ENCODE measurements at regions of chr12 and their contacts with region 1.

Region 1: DNA sequence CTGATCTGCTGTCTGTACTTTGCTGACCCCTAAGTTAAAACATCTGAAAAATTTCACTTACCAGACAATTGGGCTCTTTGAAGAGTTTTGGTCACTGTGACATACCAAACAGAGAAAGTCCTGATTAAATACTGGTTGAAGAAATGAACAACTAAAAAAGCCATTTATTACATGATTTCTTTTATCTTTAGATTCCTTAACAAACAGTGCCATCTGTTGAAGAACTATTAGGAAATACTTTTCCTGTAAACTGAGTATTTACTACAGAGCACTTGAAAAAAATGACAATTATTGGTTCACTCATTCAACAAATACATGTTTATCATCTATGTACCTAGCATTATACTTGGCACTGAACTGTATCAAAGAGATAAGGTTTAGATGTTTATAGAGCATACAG is 6.5 kb upstream of the WASHC4 start:
- DNase-seq: peak; percentile 50
- ATAC-seq: peak; percentile 84
- H3K4me3 ChIP-seq: no peak overlapping the region
- H3K27ac ChIP-seq: no peak overlapping the region
- H3K4me1 ChIP-seq: peaks cover 10% of the 10 kb centered on the region
- H3K27me3 ChIP-seq: no peaks in the 10 kb centered on the region
- CTCF ChIP-seq: peak; percentile 63

Region 2: GRCh38 chr12:103877934-103878510 is 1223.0 kb before region 1 on chr12:
- CTCF ChIA-PET with region 1: no interaction called
- POLR2A ChIA-PET with region 1: no interaction called
- intact Hi-C with region 1: loop called (anchors 5 kb)
- DNase-seq: peak; percentile 94
- ATAC-seq: peak; percentile 73
- H3K4me3 ChIP-seq: 0 out of 2 replicates have a peak overlapping the region, but pooled peaks have one; percentile 25
- H3K27ac ChIP-seq: no peak overlapping the region
- H3K4me1 ChIP-seq: peaks cover 27% of the 10 kb centered on the region
- H3K27me3 ChIP-seq: no peaks in the 10 kb centered on the region
- CTCF ChIP-seq: peak; percentile 95